Right ventricle myocardium inferior (tissue), 1 donor: ENCODE measurements at regions of chr15 and their contacts with region 1.

Region 1: DNA sequence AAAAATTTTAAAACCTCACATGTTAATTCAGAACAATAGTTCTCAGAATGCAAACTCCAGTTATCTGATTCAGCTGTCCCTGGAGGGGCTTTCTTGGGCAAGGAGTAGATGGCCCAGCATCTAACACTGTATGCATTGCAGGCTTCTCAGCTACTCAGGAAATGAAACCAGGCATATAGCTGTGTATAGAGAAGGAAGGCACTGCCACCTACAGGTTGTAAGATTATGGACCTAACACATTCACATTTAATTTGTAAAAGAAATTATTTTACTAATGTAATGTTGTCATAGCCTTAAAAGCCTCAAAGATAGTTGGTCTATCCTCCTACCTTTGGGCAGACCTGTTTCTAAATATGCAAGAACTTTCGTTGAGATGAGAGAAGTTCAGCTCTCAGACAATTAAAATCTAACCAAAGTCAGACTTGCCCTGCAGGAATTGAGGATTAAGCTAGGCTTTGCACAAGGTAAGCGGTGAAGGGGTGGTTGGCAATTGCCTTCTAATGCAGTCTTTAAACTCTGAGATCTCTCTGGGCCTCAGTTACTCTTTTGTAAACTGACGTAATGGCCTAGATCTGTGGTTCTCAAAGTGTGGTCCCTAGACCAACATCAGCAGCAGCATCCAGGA is 132.8 kb upstream of the SLC24A5 start:
- DNase-seq: no peak
- ATAC-seq: peak; percentile 84

Region 2: DNA sequence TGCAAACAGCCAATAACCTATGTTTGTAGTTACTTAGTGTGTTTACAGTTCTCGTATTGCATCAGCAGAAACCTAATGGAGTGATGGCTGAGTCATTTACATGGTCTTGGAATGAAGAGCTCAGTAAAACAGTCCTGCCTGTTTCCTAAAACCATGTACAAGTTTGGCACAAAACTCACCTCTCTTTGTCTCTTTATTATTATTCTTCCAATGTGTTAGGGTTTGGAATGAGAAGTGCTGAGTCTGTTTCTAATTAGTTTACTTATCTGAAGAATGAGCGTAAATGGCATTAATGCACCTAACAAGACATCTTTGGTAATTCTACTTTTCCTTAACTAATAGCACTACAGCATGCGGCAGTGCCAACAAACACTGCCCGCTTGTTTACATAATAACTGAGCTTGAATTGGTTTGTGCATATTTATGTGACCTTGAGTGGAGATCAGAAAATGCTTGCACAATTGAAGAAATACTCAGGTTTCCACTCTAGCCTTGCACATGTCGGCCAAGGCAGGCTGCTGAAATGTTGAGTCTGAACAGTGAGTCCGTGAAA is 656.1 kb before region 1 on chr15:
- intact Hi-C with region 1: no loop called
- DNase-seq: no peak
- ATAC-seq: no peak

Region 3: DNA sequence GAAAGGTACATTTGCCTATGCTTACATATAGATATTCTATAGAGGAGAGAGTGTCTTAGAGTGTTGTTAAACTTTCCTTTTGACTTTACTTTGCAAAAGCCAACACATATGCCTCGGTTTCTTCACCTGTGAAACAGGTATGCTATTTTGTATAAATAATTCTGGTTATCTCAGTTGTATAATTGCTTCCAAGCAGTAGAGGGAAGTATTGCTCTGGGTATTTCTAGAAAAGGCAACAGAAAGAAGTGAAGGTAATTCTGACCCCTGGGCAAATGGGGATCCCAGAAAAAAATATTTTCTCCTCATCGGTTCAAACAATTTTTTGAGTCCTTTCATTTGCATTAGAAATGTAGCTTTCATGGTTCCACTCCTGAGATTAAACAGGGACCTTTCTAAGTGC is 487.2 kb before region 1 on chr15:
- intact Hi-C with region 1: loop called (anchors 2 kb)
- DNase-seq: no peak
- ATAC-seq: no peak

Region 4: DNA sequence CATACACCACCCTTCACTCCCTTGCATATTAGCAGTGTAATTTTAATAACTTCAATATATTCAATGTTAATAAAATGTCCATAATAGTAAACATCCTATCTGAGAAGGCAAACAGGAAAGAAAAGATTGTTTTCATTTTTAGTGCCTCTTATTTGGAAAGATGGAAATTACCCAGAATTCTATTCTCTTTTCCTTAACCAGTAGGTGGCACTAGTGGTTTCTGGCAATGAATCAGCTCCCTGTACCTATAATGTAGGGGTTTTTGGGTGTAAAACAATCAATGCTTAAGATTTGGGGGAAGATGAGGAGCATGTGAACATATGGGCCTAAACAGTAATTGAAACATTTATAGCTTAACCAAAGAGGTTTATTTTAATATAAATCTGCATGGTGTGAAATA is 276.4 kb before region 1 on chr15:
- intact Hi-C with region 1: loop called (anchors 2 kb)
- DNase-seq: no peak
- ATAC-seq: no peak

Region 5: DNA sequence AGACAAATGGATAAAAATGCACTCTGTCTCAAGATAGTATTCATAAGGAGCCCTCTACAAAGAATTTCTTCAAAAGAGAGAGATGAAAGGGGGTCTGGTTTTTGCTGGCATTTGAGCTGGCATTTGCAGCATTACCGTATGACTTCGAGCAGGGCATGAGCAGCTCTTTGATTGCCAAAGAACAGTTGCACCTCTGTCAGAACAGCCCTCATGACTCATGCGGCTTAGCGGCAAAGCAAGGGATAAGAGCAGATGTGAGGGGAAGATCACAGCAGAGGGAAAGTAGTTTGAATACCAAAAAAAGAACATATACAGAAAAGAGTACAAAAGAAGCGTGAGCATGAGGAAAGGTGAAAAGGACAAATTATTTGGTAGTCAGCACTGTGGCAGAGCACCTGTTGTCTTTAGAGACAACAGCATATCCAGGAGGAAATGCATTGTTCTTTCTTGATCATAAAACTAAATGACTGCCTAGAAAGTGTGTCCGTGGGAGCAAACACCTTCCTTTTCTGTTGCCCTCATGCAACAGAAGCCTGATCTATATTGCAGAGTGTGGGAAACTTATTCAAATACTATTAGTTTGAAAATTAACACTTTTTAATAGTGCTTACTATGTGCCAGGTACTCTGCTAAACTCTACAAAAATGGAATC is 52.3 kb after region 1 on chr15:
- intact Hi-C with region 1: no loop called
- DNase-seq: no peak
- ATAC-seq: no peak